ENCODE measurements at regions of chrX and their contacts with region 1.

Region 1: GRCh38 chrX:79259073-79259689 is 108.0 kb downstream of the ITM2A start:
- DNase-seq: peak; percentile 61
- ATAC-seq: peak; percentile 84
- H3K4me3 Mint-ChIP-seq: peak overlapping the region; percentile 52
- H3K27ac Mint-ChIP-seq: peak overlapping the region; percentile 90
- H3K4me1 Mint-ChIP-seq: peaks cover 78% of the 10 kb centered on the region
- H3K27me3 Mint-ChIP-seq: no peaks in the 10 kb centered on the region

Region 2: GRCh38 chrX:79096145-79096556 is 163.0 kb before region 1 on chrX:
- CTCF ChIA-PET with region 1: no interaction called
- POLR2A ChIA-PET with region 1: no interaction called
- intact Hi-C with region 1: loop called (anchors 2 to 5 kb)
- DNase-seq: no peak
- ATAC-seq: peak; percentile 20
- H3K4me3 Mint-ChIP-seq: peak overlapping the region; percentile 46
- H3K27ac Mint-ChIP-seq: peak overlapping the region; percentile 83
- H3K4me1 Mint-ChIP-seq: peaks cover 61% of the 10 kb centered on the region
- H3K27me3 Mint-ChIP-seq: no peaks in the 10 kb centered on the region

Region 3: GRCh38 chrX:79161655-79162054 is 97.5 kb before region 1 on chrX:
- CTCF ChIA-PET with region 1: interaction called, 4 read pairs
- POLR2A ChIA-PET with region 1: interaction called, 4 read pairs
- intact Hi-C with region 1: loop called (anchors 2 kb)
- DNase-seq: peak; percentile 50
- ATAC-seq: peak; percentile 77
- H3K4me3 Mint-ChIP-seq: peak overlapping the region; percentile 75
- H3K27ac Mint-ChIP-seq: peak overlapping the region; percentile 93
- H3K4me1 Mint-ChIP-seq: peaks cover 62% of the 10 kb centered on the region
- H3K27me3 Mint-ChIP-seq: no peaks in the 10 kb centered on the region

Region 4: DNA sequence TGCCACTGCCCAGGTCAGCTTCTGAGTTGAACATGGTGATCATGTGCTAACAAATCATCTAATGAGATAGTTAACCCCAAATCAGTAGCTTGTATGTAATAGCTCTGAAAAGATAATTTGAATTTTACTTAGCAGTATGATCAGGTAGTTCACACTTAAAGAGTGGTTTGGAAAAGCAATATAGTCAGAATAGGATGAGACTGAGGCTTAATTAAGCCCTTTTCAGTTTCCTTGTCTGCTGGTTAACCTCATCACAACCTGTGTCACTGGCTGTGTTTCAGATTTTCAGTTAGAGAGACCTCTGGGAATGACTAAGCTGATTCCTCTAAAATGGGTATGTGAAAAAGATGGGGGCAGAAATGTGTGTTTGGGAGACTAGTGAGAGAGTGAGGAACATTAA is 76.6 kb before region 1 on chrX:
- CTCF ChIA-PET with region 1: interaction called, 3 read pairs
- POLR2A ChIA-PET with region 1: interaction called, 4 read pairs
- intact Hi-C with region 1: loop called (anchors 1 to 5 kb)
- DNase-seq: peak; percentile 27
- ATAC-seq: peak; percentile 88
- H3K4me3 Mint-ChIP-seq: peak overlapping the region; percentile 0
- H3K27ac Mint-ChIP-seq: peak overlapping the region; percentile 23
- H3K4me1 Mint-ChIP-seq: peaks cover 57% of the 10 kb centered on the region
- H3K27me3 Mint-ChIP-seq: no peaks in the 10 kb centered on the region

Region 5: GRCh38 chrX:79243691-79244090 is 15.5 kb before region 1 on chrX:
- CTCF ChIA-PET with region 1: no interaction called
- POLR2A ChIA-PET with region 1: no interaction called
- intact Hi-C with region 1: loop called in 1 of 2 experiments (anchors 2 kb)
- DNase-seq: no peak
- ATAC-seq: peak; percentile 83
- H3K4me3 Mint-ChIP-seq: no peak overlapping the region
- H3K27ac Mint-ChIP-seq: no peak overlapping the region
- H3K4me1 Mint-ChIP-seq: peaks cover 36% of the 10 kb centered on the region
- H3K27me3 Mint-ChIP-seq: no peaks in the 10 kb centered on the region

Region 6: DNA sequence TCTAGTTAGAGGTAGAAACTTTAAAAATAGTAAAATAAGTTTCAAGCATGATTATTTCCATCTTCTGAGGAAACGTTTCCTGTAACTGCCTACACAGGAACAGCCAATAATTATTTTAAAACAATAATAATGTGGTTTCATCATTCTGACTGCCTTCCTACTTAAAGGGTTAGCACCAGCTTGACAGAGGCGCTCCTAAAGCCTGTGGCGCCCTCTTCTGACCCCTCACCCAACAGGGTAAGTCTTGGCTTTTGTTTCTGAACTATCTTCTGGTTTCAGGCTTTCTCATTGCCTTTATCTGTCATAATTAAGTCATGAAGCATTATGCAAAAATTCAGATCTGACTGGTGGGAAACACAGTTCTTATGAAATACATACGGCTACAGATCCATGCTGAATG is 11.2 kb after region 1 on chrX:
- CTCF ChIA-PET with region 1: interaction called, 7 read pairs
- POLR2A ChIA-PET with region 1: no interaction called
- intact Hi-C with region 1: loop called in 1 of 2 experiments (anchors 1 kb)
- DNase-seq: peak; percentile 87
- ATAC-seq: peak; percentile 99
- H3K4me3 Mint-ChIP-seq: no peak overlapping the region
- H3K27ac Mint-ChIP-seq: peak overlapping the region; percentile 47
- H3K4me1 Mint-ChIP-seq: peaks cover 44% of the 10 kb centered on the region
- H3K27me3 Mint-ChIP-seq: no peaks in the 10 kb centered on the region

Region 7: DNA sequence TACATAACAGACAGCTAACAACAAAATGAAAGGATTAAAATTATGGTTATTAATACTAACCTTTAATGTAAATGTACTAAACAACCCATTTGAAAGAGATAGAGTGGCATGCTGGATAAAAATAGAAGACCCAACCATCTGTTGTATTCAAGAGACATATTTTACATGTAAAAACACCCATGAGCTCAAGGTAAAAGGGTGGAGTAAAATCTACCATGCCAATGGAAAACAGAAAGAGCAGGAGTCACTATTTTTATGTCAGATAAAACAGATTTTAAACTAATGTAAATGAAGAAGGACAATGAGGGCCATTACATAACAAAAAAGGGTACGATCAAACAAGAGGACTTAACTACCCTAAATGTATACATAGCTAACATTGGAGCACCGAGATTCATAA is 41.6 kb after region 1 on chrX:
- CTCF ChIA-PET with region 1: no interaction called
- POLR2A ChIA-PET with region 1: no interaction called
- intact Hi-C with region 1: no loop called
- DNase-seq: no peak
- ATAC-seq: no peak
- H3K4me3 Mint-ChIP-seq: no peak overlapping the region
- H3K27ac Mint-ChIP-seq: no peak overlapping the region
- H3K4me1 Mint-ChIP-seq: no peaks in the 10 kb centered on the region
- H3K27me3 Mint-ChIP-seq: no peaks in the 10 kb centered on the region

Measured in activated CD4-positive, alpha-beta T cell treated with anti-CD3 and anti-CD28 coated beads for 36 hours (primary cell).